Activated T-helper 2 cell treated with anti-CD3 and anti-CD28 coated beads, Interferon-gamma antibody, Interleukin-2, Interleukin-4, amounts not matched to agents 10 μg/mL and 5 μg/mL and 100 μg/mL, durations not matched to agents 14 hours and 24 hours and 36 hours (primary cell): ENCODE measurements at regions of chr1 and their contacts with region 1.

Region 1: DNA sequence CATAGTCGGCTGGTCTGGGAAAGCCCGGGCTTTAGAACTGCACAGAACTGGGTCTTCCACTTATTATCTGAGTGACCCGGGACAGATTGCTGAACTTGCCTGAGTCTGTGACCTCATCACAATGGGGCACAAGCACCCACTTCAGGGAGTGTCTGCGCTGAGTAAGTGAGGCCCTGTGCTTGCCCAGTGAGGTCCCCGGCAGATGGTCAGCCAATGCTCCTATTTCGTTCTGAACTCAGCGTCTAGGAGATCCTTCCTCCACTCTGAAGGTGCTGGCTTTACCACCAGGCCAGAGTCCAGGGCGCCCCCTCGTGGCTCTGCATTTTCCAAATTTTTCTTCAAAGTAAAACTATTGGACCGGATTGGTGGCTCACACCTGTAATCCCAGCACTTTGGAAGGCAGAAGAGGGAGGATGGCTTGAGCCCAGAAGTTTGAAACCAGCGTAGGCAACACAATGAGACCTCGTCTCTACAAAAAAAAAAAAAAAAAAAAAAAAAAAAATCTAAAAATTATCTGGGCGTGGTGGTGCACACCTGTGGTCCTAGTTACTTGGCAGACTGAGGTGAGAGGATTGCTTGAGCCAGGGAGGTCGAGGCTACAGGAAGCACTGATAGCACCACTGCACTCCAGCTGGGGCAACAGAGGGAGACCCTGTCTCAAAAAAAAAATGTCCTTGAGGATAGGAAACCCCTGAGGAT is 61.7 kb downstream of the FCRL5 start:
- DNase-seq: peak; percentile 41
- H3K4me3 Mint-ChIP-seq: no peak overlapping the region
- H3K27ac Mint-ChIP-seq: no peak overlapping the region
- H3K4me1 Mint-ChIP-seq: no peaks in the 10 kb centered on the region
- H3K27me3 Mint-ChIP-seq: peaks cover 8% of the 10 kb centered on the region

Region 2: DNA sequence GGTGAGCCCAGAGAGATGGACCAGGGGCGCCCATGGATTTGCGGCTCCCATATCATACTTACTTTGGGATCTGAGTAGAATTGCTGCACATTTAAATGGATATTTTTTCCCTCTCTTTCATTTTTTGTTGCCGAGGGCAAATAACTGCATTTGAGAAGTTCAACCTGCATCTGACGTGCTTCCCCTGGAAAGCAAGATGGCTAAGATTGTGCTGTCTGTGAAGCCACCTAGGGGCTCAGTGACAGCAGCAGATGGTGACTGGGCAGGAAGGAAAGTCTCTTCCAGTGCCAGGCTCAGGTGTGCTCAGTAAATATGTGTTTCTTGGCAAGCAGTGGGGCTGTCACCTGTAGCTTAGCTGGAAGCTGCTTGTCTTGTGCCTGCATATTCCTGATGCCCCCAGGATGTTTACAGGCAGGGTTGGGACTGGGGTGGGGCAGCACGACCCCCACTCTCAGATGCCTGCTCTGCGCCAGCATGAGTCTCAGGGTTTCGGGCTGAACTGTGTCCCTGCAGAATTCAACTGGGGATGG is 292.6 kb before region 1 on chr1:
- intact Hi-C with region 1: loop called (anchors 2 kb)
- DNase-seq: no peak
- H3K4me3 Mint-ChIP-seq: no peak overlapping the region
- H3K27ac Mint-ChIP-seq: no peak overlapping the region
- H3K4me1 Mint-ChIP-seq: peaks cover 4% of the 10 kb centered on the region
- H3K27me3 Mint-ChIP-seq: peaks cover 18% of the 10 kb centered on the region

Region 3: GRCh38 chr1:157369808-157370521 is 120.7 kb before region 1 on chr1:
- intact Hi-C with region 1: loop called (anchors 5 kb)
- DNase-seq: peak; percentile 20
- H3K4me3 Mint-ChIP-seq: no peak overlapping the region
- H3K27ac Mint-ChIP-seq: no peak overlapping the region
- H3K4me1 Mint-ChIP-seq: peaks cover 2% of the 10 kb centered on the region
- H3K27me3 Mint-ChIP-seq: peaks cover 14% of the 10 kb centered on the region

Region 4: DNA sequence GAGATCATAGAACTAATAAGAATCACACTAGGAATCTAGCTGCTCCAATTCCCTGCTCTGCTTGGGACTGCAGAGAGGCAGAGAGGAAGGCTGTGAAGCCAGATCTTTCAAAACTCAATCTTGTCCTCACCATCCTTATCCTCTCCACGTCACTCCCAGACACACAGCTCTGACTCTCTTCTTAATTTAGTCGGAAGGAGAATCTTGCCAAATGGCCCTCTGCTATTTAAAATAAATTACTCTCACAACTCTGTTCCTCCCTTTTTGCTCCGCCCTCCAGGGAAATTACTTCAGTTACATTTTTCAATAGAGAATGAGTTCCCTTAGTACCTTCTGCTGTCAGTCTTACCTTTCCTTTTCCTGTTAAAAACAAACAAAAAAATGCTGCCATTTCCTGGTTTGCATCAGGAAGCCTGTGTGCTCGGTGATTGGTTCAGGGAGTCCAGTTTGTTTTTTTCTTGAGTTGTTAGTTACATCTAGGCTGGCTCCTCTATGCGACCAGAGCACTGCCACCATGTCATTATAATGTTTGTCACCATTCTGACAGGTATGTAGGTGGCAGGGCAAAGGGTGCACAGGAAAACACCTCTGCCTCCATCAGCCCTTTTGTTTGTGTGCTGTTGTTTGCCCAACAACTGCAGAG is 18.4 kb before region 1 on chr1:
- intact Hi-C with region 1: no loop called
- DNase-seq: no peak
- H3K4me3 Mint-ChIP-seq: no peak overlapping the region
- H3K27ac Mint-ChIP-seq: no peak overlapping the region
- H3K4me1 Mint-ChIP-seq: no peaks in the 10 kb centered on the region
- H3K27me3 Mint-ChIP-seq: peaks cover 4% of the 10 kb centered on the region